Vagina (tissue), 2 donors: ENCODE measurements at regions of chr1 and their contacts with region 1.

Region 1: DNA sequence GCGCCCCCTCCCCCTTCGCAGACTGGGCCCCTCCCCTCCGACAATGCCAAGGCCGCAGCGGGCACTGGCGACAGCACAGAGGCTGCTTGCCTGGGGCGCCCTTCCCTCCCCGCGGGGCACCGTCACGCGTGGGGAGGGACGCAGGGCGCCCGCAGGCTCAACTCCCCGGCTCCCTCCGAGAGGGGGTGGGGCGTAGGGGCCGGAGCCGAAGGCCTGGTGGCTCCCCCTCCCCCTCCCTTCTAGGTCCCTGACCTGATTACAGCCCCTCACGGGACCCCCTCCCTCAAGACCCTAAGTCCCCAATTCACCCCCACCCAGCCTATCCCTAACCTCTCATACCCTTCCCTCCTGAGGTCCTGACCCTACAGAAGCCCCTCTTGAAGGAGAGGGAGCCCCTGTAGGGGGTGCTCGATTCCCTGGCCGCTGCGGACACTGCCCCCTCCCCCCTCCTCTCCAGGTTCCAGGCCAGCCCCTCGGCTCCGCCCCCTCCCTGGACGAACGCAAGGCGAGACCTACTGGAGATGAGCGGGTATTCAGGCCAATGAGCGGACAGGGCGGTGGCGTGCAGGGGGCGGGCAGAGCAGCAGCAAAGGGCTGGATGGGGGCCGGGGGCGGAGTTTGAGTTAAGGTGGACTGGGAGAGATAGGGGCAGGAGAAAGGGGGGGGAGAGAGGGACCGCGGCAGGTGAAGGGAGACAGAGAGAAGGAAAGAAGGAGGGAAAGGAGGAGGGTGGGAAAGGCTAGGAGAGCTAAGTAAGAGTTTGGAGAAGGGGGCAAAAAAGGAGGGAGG is 733 bp upstream of the ZBTB7B start:
- DNase-seq: peak; percentile 99 to 100
- H3K4me3 ChIP-seq: peak overlapping the region; percentile 84 to 85
- H3K27ac ChIP-seq: peak overlapping the region; percentile 99
- H3K4me1 ChIP-seq: peaks cover 59% of the 10 kb centered on the region
- H3K27me3 ChIP-seq: no peaks in the 10 kb centered on the region
- CTCF ChIP-seq: peak in 1 of 3 experiments; percentile 43
- POLR2A ChIP-seq: peak in 1 of 2 donors; percentile 90

Region 2: GRCh38 chr1:154324669-154325582 is 676.9 kb before region 1 on chr1 and contains the start of gene ATP8B2:
- intact Hi-C with region 1: loop called (anchors 5 kb)
- DNase-seq: no peak
- H3K4me3 ChIP-seq: peak within 1 kb of the TSS; percentile 64 to 81
- H3K27ac ChIP-seq: peak within 1 kb of the TSS; percentile 98
- H3K4me1 ChIP-seq: peaks cover 39% of the 10 kb centered on the region
- H3K27me3 ChIP-seq: no peaks in the 10 kb centered on the region
- CTCF ChIP-seq: peak; percentile 72 to 93 (median 78)
- POLR2A ChIP-seq: no peak
- total RNA-seq, gene ATP8B2: 65.1 TPM

Region 3: GRCh38 chr1:154969860-154970452 is 31.9 kb before region 1 on chr1:
- intact Hi-C with region 1: loop called (anchors 5 kb)
- DNase-seq: no peak
- H3K4me3 ChIP-seq: peak overlapping the region; percentile 46 to 58
- H3K27ac ChIP-seq: peak overlapping the region; percentile 99
- H3K4me1 ChIP-seq: peaks cover 65% of the 10 kb centered on the region
- H3K27me3 ChIP-seq: no peaks in the 10 kb centered on the region
- CTCF ChIP-seq: no peak
- POLR2A ChIP-seq: no peak

Region 4: DNA sequence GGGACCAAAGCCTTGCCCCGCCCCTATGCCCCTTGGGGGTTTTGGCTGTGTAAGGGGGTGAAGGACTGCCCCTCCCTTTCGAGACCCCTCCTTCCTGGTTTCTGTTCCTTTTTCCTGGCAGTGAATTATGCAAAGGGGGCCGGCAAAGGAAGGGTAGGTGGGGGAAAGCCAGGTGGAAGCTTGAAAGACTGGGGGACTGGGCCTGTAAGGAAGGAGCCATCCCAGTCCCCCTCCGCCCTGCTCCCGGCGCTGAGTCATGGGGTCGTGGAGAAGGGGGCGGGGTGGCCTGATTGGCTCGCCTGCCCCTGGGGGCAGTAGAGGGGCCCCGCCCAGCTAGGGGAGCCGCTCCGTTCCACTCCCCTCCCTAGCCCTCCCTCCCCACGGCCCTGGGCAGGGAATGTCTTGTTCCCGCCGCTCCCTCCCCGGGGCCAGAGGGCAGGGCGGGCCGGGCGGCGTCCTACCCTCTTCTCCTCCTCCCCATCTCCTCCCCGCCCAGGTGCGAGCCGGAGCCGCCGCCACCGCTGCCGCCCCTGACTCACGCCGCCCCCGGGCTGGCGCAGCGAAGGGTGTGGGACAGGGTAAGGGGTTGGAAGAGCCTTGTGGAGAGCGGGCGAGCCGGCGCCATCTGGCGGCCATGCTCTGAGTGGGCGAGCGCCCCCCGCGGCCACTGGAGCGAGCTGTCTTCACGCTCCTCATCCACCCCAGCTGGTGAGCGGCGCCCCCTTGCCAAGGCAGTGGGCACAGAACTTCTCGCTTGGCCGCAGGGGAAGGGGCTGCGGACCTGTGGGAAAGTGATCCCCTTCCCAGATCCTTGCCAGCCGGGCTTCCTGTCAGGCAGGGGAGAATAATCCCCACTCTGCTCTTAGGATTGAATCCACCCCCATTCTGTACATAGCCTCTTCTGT is 15.4 kb after region 1 on chr1:
- intact Hi-C with region 1: loop called (anchors 2 kb)
- DNase-seq: peak in 1 of 2 donors; percentile 97
- H3K4me3 ChIP-seq: peak overlapping the region; percentile 34 to 54
- H3K27ac ChIP-seq: peak overlapping the region; percentile 99
- H3K4me1 ChIP-seq: peaks cover 66% of the 10 kb centered on the region
- H3K27me3 ChIP-seq: no peaks in the 10 kb centered on the region
- CTCF ChIP-seq: peak; percentile 95 to 98 (median 98)
- POLR2A ChIP-seq: peak in 1 of 2 donors; percentile 16

Region 5: DNA sequence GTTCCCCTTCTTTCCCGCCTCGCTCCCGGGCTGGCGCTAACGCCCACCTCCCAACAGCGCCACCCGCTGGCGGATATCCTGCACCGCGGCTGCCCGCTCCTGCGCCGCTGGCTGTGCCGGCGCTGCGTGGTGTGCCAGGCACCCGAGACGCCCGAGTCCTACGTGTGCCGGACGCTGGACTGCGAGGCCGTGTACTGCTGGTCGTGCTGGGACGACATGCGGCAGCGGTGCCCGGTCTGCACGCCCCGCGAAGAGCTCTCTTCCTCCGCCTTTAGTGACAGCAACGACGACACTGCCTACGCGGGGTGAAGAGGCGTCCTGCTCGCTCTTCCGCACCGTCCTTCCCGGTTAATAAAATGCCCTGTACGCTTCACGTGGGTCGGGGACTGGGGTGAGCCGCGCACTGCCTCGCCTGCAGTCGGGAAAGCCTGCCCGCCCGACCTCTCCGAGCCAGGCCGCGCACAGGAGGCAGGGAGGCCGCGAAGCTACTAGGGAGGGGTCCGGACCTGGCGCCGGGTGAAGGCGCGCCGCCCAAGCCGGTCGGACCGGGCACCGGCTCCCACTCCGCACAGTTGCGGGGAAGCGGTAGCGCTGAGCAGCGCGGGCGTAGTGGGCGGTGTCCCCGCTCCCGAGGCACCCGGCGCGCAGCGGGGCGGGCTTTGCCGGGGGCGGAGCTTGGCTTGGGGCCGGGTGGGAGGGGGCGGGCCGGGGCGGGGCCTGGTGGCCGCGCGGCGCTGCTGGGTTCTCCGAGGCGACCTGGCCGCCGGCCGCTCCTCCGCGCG is 48.9 kb after region 1 on chr1 and contains the start of gene ADAM15:
- intact Hi-C with region 1: loop called (anchors 5 kb)
- DNase-seq: no peak
- H3K4me3 ChIP-seq: peak within 1 kb of the TSS; percentile 86 to 88
- H3K27ac ChIP-seq: peak within 1 kb of the TSS; percentile 96
- H3K4me1 ChIP-seq: peaks cover 42% of the 10 kb centered on the region
- H3K27me3 ChIP-seq: no peaks in the 10 kb centered on the region
- CTCF ChIP-seq: peak; percentile 81 to 82 (median 81)
- POLR2A ChIP-seq: peak in 1 of 2 donors; percentile 30
- total RNA-seq, gene ADAM15: 193 TPM

Region 6: DNA sequence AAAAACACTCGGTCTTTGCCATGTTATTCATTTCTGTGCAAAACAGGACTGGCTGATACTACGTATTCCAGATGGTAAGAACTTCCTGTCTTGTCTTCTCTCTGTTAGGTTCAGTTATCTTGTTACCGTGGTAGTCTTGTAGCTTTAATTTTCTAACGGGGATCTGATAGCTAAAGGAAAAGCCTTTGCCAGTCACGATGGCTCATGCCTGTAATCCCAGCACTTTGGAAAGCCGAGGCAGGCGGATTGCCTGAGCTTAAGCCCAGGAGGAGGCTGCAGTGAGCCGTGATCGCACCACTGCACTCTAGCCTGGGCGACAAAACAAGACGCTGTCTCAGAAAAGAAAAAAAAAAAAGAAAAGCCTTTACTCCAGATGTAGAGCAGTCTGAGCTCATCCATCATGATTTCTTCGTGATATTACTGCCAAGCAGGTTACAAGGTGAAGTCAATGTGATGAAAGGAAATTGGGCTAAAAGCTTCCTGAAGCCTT is 597.0 kb after region 1 on chr1:
- intact Hi-C with region 1: no loop called
- DNase-seq: no peak
- H3K4me3 ChIP-seq: peak overlapping the region in 1 of 2 donors; percentile 24
- H3K27ac ChIP-seq: no peak overlapping the region
- H3K4me1 ChIP-seq: peaks cover 4% of the 10 kb centered on the region
- H3K27me3 ChIP-seq: no peaks in the 10 kb centered on the region
- CTCF ChIP-seq: no peak
- POLR2A ChIP-seq: no peak